Calu3 (cell line): ENCODE measurements at regions of chr19 and their contacts with region 1.

Region 1: DNA sequence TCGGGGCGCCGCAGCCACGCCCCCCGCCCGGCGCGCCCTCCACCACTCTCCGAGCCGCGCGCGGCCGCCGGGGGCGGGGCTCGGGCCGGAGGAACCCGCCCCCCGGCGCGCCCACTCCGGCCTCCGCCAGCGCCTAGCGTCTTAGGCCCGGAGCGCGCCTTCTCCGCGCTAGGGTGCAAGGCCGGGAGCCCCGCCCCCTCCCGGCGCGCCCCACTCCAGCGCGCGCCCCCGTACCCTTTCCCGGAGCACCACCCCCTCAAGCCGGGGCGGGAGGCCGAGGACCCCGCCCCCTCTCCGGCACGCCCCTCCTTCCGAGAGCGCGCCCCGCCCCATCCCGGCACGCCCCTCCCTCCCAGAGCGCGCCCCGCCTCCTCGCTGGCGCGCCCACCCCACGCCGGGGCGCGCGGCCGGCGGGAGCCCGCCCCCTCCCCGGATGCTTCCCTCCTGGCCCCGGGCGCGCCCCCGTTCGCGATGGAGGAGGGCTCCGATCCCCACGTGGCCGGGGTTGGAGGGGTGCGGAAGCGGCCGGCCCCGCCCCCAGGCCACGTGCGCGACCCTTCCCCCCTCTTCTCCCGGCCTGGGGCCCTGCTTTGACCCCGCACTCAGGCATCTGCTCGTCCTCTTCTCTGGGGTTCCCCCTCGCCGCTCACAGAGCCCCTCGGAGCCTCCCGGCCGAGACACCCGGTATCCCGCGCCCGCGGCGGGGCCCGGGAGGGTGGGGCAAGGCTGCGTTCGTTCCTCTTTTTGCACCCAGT is 524 bp upstream of the KLF16 start:
- DNase-seq: peak; percentile 91
- H3K4me3 Mint-ChIP-seq: peak overlapping the region; percentile 70
- H3K27ac Mint-ChIP-seq: no peak overlapping the region
- H3K4me1 Mint-ChIP-seq: no peaks in the 10 kb centered on the region
- H3K27me3 Mint-ChIP-seq: no peaks in the 10 kb centered on the region
- CTCF ChIP-seq: no peak

Region 2: DNA sequence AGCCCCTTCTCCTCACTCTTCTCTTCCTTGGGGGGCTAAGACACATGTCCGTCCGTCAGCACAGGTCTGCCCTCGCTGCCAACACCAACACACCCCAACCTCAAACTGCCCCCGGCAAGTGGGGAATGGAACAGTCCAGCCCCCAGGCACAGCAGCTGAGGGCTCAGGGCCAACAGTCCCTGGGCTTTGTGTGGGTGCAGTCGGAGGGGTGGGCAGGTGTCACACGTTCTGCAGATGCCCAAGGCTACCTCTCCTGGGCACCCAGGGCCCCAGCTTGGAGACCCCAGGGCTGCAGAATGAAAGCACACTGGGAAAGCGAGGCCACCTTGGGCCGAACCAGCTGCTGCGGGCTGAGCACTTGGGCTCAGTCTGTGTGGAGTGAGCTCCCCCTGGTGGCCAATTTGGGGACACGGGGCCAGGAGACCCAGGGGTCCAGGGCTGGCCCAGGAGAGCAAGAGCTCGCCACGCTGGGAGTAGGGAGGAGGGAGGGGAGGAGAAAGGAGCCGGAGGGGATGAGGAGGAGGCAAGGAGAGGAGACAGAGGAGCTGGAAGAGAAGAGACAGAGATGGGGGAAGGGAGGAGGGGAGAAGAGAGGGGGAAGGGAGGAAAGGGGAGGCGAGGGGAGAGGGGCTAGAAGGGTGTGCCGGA is 37.9 kb before region 1 on chr19:
- CTCF ChIA-PET with region 1: interaction called, 11 read pairs
- intact Hi-C with region 1: no loop called
- DNase-seq: peak; percentile 75
- H3K4me3 Mint-ChIP-seq: no peak overlapping the region
- H3K27ac Mint-ChIP-seq: no peak overlapping the region
- H3K4me1 Mint-ChIP-seq: no peaks in the 10 kb centered on the region
- H3K27me3 Mint-ChIP-seq: no peaks in the 10 kb centered on the region
- CTCF ChIP-seq: peak; percentile 57

Region 3: GRCh38 chr19:1875646-1876495 is 12.0 kb after region 1 on chr19:
- CTCF ChIA-PET with region 1: interaction called, 10 read pairs
- intact Hi-C with region 1: no loop called
- DNase-seq: peak; percentile 86
- H3K4me3 Mint-ChIP-seq: peak overlapping the region; percentile 96
- H3K27ac Mint-ChIP-seq: peak overlapping the region; percentile 91
- H3K4me1 Mint-ChIP-seq: peaks cover 8% of the 10 kb centered on the region
- H3K27me3 Mint-ChIP-seq: no peaks in the 10 kb centered on the region
- CTCF ChIP-seq: no peak